Naive thymus-derived CD4-positive, alpha-beta T cell (primary cell): ENCODE measurements at regions of chr2 and their contacts with region 1.

Region 1: GRCh38 chr2:164061129-164061746 is 325.4 kb upstream of the FIGN start:
- DNase-seq: no peak
- ATAC-seq: no peak
- H3K4me3 ChIP-seq: no peak overlapping the region
- H3K4me3 Mint-ChIP-seq: no peak overlapping the region
- H3K27ac ChIP-seq: no peak overlapping the region
- H3K27ac Mint-ChIP-seq: no peak overlapping the region
- H3K4me1 ChIP-seq: no peaks in the 10 kb centered on the region
- H3K4me1 Mint-ChIP-seq: no peaks in the 10 kb centered on the region
- H3K27me3 ChIP-seq: no peaks in the 10 kb centered on the region
- H3K27me3 Mint-ChIP-seq: no peaks in the 10 kb centered on the region

Region 2: DNA sequence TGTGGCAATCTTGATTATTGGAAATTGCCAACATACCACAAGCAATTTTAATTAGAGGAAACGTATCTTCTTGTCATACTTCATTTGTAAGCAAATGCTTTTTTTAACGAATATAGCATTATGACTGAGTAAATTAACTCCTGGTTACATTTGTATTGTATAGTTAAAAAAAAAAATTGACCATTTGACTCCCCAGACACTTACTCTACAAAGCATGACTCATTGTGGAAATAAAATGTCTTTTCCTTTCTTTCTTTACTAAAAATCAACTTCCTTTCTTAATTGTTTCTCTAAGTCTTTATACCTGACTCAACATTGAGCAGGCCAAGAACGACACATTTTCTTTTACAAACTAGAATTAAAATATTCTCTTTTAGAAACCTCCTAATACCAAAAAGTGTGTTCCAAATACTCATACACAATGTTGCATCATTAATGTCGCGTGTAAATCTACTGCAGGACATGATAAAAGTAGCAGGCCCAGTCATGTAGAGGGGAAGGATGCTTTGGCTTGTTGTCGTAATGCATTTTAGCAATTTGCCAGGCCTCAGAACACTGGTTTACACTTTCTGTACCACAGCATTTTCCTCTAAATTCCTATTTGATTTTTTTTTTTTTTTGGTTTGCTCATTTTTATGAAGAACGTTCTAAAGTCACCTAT is 873.1 kb before region 1 on chr2:
- CTCF ChIA-PET with region 1: no interaction called
- POLR2A ChIA-PET with region 1: no interaction called
- intact Hi-C with region 1: loop called in 1 of 2 experiments (anchors 5 kb)
- DNase-seq: no peak
- ATAC-seq: no peak
- H3K4me3 ChIP-seq: no peak overlapping the region
- H3K4me3 Mint-ChIP-seq: no peak overlapping the region
- H3K27ac ChIP-seq: no peak overlapping the region
- H3K27ac Mint-ChIP-seq: no peak overlapping the region
- H3K4me1 ChIP-seq: no peaks in the 10 kb centered on the region
- H3K4me1 Mint-ChIP-seq: no peaks in the 10 kb centered on the region
- H3K27me3 ChIP-seq: no peaks in the 10 kb centered on the region
- H3K27me3 Mint-ChIP-seq: no peaks in the 10 kb centered on the region